ENCODE measurements at regions of chr11 and their contacts with region 1.

Region 1: GRCh38 chr11:57493507-57494503 is 21.7 kb downstream of the SLC43A1 start:
- DNase-seq: peak; percentile 77
- ATAC-seq: peak; percentile 96
- H3K4me3 ChIP-seq: no peak overlapping the region
- H3K4me3 Mint-ChIP-seq: no peak overlapping the region
- H3K27ac ChIP-seq: no peak overlapping the region
- H3K27ac Mint-ChIP-seq: no peak overlapping the region
- H3K4me1 ChIP-seq: no peaks in the 10 kb centered on the region
- H3K4me1 Mint-ChIP-seq: peaks cover 2% of the 10 kb centered on the region
- H3K27me3 ChIP-seq: no peaks in the 10 kb centered on the region
- H3K27me3 Mint-ChIP-seq: no peaks in the 10 kb centered on the region
- CTCF ChIP-seq: peak; percentile 97

Region 2: GRCh38 chr11:57085611-57086010 is 408.2 kb before region 1 on chr11:
- CTCF ChIA-PET with region 1: no interaction called
- POLR2A ChIA-PET with region 1: no interaction called
- intact Hi-C with region 1: no loop called
- DNase-seq: no peak
- ATAC-seq: no peak
- H3K4me3 ChIP-seq: no peak overlapping the region
- H3K4me3 Mint-ChIP-seq: no peak overlapping the region
- H3K27ac ChIP-seq: no peak overlapping the region
- H3K27ac Mint-ChIP-seq: no peak overlapping the region
- H3K4me1 ChIP-seq: no peaks in the 10 kb centered on the region
- H3K4me1 Mint-ChIP-seq: no peaks in the 10 kb centered on the region
- H3K27me3 ChIP-seq: no peaks in the 10 kb centered on the region
- H3K27me3 Mint-ChIP-seq: peaks cover 7% of the 10 kb centered on the region
- CTCF ChIP-seq: no peak

Region 3: GRCh38 chr11:57345555-57346211 is 148.1 kb before region 1 on chr11:
- CTCF ChIA-PET with region 1: interaction called, 10 read pairs
- POLR2A ChIA-PET with region 1: no interaction called
- intact Hi-C with region 1: no loop called
- DNase-seq: peak; percentile 78
- ATAC-seq: peak; percentile 82
- H3K4me3 ChIP-seq: no peak overlapping the region
- H3K4me3 Mint-ChIP-seq: no peak overlapping the region
- H3K27ac ChIP-seq: no peak overlapping the region
- H3K27ac Mint-ChIP-seq: no peak overlapping the region
- H3K4me1 ChIP-seq: peaks cover 0 to 6% of the 10 kb centered on the region in 2 donors
- H3K4me1 Mint-ChIP-seq: peaks cover 6% of the 10 kb centered on the region
- H3K27me3 ChIP-seq: no peaks in the 10 kb centered on the region
- H3K27me3 Mint-ChIP-seq: peaks cover 8% of the 10 kb centered on the region
- CTCF ChIP-seq: peak; percentile 82

Region 4: GRCh38 chr11:57474017-57474802 is 19.6 kb before region 1 on chr11:
- CTCF ChIA-PET with region 1: interaction called, 17 read pairs
- POLR2A ChIA-PET with region 1: no interaction called
- intact Hi-C with region 1: no loop called
- DNase-seq: no peak
- ATAC-seq: no peak
- H3K4me3 ChIP-seq: no peak overlapping the region
- H3K4me3 Mint-ChIP-seq: peak overlapping the region; percentile 4
- H3K27ac ChIP-seq: no peak overlapping the region
- H3K27ac Mint-ChIP-seq: no peak overlapping the region
- H3K4me1 ChIP-seq: peaks cover 30 to 31% of the 10 kb centered on the region in 2 donors
- H3K4me1 Mint-ChIP-seq: peaks cover 25% of the 10 kb centered on the region
- H3K27me3 ChIP-seq: peaks cover 0 to 31% (median 3%) of the 10 kb centered on the region in 4 experiments
- H3K27me3 Mint-ChIP-seq: peaks cover 5% of the 10 kb centered on the region
- CTCF ChIP-seq: no peak

Region 5: DNA sequence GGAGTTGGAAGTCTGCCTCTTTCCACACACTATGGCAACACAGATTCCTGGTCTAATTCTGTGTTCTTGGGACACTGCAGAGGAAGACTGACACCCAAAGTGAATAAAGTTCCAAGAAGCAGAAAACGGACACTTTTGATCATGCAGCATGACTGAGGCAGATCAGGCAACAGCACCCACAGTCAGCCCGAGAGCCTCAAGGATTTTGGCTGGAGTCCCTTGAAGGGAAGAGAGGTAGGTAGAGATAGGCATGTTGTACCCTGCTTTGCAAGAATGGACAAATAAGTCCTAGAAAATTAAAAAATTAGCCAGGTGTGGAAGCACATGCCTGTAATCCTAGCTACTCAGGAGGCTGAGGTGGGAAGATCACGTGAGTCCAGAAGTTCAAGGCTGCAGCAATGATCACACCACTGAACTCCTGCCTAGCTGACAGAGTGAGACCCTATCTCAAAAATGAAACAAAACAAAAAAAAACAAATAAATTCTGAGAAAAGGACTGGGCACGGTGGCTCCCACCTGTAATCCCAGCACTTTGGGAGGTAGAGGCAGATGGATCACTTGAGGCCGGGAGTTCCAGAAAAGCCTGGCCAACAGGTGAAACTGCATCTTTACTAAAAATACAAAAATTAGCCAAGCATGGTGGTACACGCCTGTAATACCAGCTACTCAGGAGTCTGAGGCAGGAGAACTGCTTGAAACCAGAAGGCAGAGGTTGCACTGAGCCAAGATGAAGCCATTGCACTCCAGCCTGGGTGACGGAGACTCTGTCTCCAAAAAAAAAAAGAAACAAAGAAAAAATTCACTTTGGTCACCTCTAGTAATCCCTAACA is 14.8 kb after region 1 on chr11:
- CTCF ChIA-PET with region 1: interaction called, 49 read pairs
- POLR2A ChIA-PET with region 1: interaction called, 4 read pairs
- intact Hi-C with region 1: no loop called
- DNase-seq: no peak
- ATAC-seq: no peak
- H3K4me3 ChIP-seq: no peak overlapping the region
- H3K4me3 Mint-ChIP-seq: no peak overlapping the region
- H3K27ac ChIP-seq: no peak overlapping the region
- H3K27ac Mint-ChIP-seq: no peak overlapping the region
- H3K4me1 ChIP-seq: peaks cover 0 to 7% of the 10 kb centered on the region in 2 donors
- H3K4me1 Mint-ChIP-seq: peaks cover 18% of the 10 kb centered on the region
- H3K27me3 ChIP-seq: no peaks in the 10 kb centered on the region
- H3K27me3 Mint-ChIP-seq: no peaks in the 10 kb centered on the region
- CTCF ChIP-seq: no peak

Region 6: DNA sequence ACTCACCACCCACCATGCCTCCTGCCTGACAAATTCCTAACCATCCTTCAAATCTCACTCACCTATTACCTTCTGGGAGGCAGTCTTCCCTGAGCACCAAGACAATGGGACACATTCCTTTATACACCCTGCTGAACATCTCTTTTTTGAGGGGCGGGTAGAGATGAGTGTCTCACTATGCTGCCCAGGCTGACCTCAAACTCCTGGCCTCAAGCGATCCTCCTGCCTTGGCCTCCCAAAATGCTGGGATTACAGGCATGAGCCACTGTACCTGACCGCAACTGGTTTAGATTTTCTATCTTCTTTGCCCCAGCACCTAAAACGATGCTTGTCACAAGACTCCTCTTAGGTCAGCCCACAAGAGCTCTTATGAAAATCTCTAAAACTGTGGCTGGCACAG is 29.6 kb after region 1 on chr11:
- CTCF ChIA-PET with region 1: interaction called, 355 read pairs
- POLR2A ChIA-PET with region 1: no interaction called
- intact Hi-C with region 1: loop called (anchors 1 kb)
- DNase-seq: no peak
- ATAC-seq: no peak
- H3K4me3 ChIP-seq: no peak overlapping the region
- H3K4me3 Mint-ChIP-seq: no peak overlapping the region
- H3K27ac ChIP-seq: no peak overlapping the region
- H3K27ac Mint-ChIP-seq: no peak overlapping the region
- H3K4me1 ChIP-seq: no peaks in the 10 kb centered on the region
- H3K4me1 Mint-ChIP-seq: no peaks in the 10 kb centered on the region
- H3K27me3 ChIP-seq: no peaks in the 10 kb centered on the region
- H3K27me3 Mint-ChIP-seq: no peaks in the 10 kb centered on the region
- CTCF ChIP-seq: no peak

Region 7: DNA sequence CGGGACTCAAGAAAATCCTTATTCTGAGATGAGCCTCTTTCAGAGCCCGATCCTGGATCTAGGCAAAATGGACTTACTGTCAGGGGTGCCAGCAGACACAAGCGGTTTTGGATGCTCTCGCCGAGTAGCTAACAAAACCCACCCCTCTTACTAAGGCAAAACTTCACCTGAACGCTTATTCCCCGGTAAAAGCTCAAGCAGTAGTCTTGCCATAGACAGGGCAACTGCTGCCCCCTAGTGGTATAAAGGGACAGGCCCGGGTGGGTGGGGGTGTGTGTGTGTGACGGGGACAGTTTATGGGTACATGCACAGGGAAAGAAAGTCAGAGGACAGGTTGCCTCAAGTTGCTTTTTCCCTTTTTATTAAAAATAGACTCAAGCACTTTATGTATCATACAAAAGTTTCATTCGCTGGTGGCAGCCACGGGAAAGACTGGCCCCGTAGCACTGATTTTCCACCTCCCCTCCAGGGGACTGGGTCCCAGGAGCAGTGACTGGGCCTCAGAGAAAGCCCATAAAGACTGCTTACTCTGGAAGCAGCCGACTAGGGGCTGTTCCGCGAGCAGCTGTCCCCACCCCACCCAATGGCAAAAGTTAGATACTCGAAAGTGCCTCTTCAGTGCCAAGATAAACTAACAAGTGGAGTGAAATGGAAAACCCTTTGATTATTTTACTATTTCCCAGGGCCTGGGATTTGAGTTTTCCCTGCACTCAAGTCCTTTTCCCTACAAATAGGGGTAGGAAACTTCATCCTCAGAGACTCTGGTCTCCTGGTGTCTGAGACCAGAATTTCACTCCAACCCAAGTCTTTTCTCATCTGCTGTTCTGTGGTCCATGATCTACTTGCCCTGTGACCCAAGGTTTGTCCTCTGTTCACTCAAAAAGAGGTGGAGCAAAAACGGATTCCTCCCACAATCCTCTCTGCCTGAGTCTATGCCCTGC is 151.2 kb after region 1 on chr11:
- CTCF ChIA-PET with region 1: interaction called, 106 read pairs
- POLR2A ChIA-PET with region 1: no interaction called
- intact Hi-C with region 1: loop called (anchors 1 kb)
- DNase-seq: peak; percentile 85
- ATAC-seq: peak; percentile 71
- H3K4me3 ChIP-seq: no peak overlapping the region
- H3K4me3 Mint-ChIP-seq: no peak overlapping the region
- H3K27ac ChIP-seq: no peak overlapping the region
- H3K27ac Mint-ChIP-seq: no peak overlapping the region
- H3K4me1 ChIP-seq: peaks cover 43 to 46% of the 10 kb centered on the region in 2 donors
- H3K4me1 Mint-ChIP-seq: peaks cover 40% of the 10 kb centered on the region
- H3K27me3 ChIP-seq: peaks cover 0 to 58% (median 47%) of the 10 kb centered on the region in 4 experiments
- H3K27me3 Mint-ChIP-seq: peaks cover 70% of the 10 kb centered on the region
- CTCF ChIP-seq: peak; percentile 81

Measured in B cell (primary cell).